Activated CD4-positive, alpha-beta T cell treated with anti-CD3 and anti-CD28 coated beads, Interleukin-2, amount 10 ng/mL, durations not matched to agents 24 days and 14 days (primary cell): ENCODE measurements at regions of chr1 and their contacts with region 1.

Region 1: GRCh38 chr1:193537266-193538002 is 351.0 kb upstream of the B3GALT2 start:
- DNase-seq: peak; percentile 91
- H3K4me3 Mint-ChIP-seq: peak overlapping the region; percentile 22
- H3K27ac Mint-ChIP-seq: peak overlapping the region; percentile 75
- H3K4me1 Mint-ChIP-seq: peaks cover 45% of the 10 kb centered on the region
- H3K27me3 Mint-ChIP-seq: no peaks in the 10 kb centered on the region

Region 2: GRCh38 chr1:193121616-193122593 is 415.5 kb before region 1 on chr1 and contains the start of gene CDC73:
- intact Hi-C with region 1: loop called (anchors 1 kb)
- DNase-seq: peak; percentile 99
- H3K4me3 Mint-ChIP-seq: peak within 1 kb of the TSS; percentile 100
- H3K27ac Mint-ChIP-seq: peak within 1 kb of the TSS; percentile 95
- H3K4me1 Mint-ChIP-seq: peaks cover 43% of the 10 kb centered on the region
- H3K27me3 Mint-ChIP-seq: peaks cover 10% of the 10 kb centered on the region
- total RNA-seq, gene CDC73: 55.2 and 56.0 TPM in 2 replicates

Region 3: GRCh38 chr1:193417945-193418744 is 119.3 kb before region 1 on chr1:
- intact Hi-C with region 1: loop called (anchors 1 kb)
- DNase-seq: peak; percentile 73
- H3K4me3 Mint-ChIP-seq: peak overlapping the region; percentile 76
- H3K27ac Mint-ChIP-seq: peak overlapping the region; percentile 67
- H3K4me1 Mint-ChIP-seq: peaks cover 38% of the 10 kb centered on the region
- H3K27me3 Mint-ChIP-seq: no peaks in the 10 kb centered on the region

Region 4: DNA sequence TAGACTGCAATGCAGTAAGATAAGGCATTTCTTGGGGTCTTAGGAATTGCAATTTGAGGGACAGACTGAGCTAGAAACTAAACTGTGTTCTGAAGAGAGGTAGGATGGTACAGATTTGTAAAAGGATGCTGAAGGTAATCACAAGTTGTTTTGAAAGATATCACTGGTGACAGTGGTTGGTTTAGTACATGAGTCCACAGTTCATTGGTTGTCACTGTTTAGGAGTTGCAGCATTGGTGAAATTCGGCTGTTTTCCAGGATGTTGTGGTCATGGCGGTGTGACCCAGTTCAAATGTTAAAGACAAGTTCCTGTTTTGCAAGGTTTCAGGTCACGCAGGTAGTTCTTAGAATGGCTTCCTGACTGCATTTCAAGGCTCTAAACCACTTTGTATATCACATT is 58.2 kb before region 1 on chr1:
- intact Hi-C with region 1: loop called (anchors 1 kb)
- DNase-seq: peak; percentile 95
- H3K4me3 Mint-ChIP-seq: peak overlapping the region; percentile 70
- H3K27ac Mint-ChIP-seq: peak overlapping the region; percentile 95
- H3K4me1 Mint-ChIP-seq: peaks cover 62% of the 10 kb centered on the region
- H3K27me3 Mint-ChIP-seq: no peaks in the 10 kb centered on the region

Region 5: GRCh38 chr1:193569096-193569982 is 31.9 kb after region 1 on chr1:
- intact Hi-C with region 1: loop called (anchors 1 kb)
- DNase-seq: peak; percentile 78
- H3K4me3 Mint-ChIP-seq: peak overlapping the region; percentile 4
- H3K27ac Mint-ChIP-seq: peak overlapping the region; percentile 84
- H3K4me1 Mint-ChIP-seq: peaks cover 20% of the 10 kb centered on the region
- H3K27me3 Mint-ChIP-seq: no peaks in the 10 kb centered on the region

Region 6: GRCh38 chr1:193799948-193800690 is 262.7 kb after region 1 on chr1:
- intact Hi-C with region 1: loop called (anchors 10 kb)
- DNase-seq: no peak
- H3K4me3 Mint-ChIP-seq: no peak overlapping the region
- H3K27ac Mint-ChIP-seq: peak overlapping the region; percentile 11
- H3K4me1 Mint-ChIP-seq: peaks cover 6% of the 10 kb centered on the region
- H3K27me3 Mint-ChIP-seq: no peaks in the 10 kb centered on the region

Region 7: DNA sequence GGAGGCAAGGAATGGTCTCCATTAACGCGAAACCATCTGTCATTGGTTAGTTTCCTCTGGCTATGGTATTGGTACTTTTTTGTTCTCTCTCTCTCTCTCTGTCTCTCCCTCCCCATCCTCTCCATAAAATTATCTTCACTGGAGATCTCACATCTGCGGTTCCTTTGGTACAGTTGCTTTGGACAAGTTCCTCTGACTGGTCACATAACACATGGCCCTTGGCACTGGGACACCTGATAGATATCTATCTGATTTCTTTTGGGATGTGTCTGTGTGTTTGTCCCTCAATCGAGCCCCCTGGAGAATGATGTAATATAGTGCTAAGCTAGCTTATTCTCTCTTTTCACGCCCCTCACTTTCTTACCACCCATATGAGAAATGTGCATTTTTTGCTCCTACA is 331.0 kb after region 1 on chr1:
- intact Hi-C with region 1: no loop called
- DNase-seq: no peak
- H3K4me3 Mint-ChIP-seq: no peak overlapping the region
- H3K27ac Mint-ChIP-seq: no peak overlapping the region
- H3K4me1 Mint-ChIP-seq: no peaks in the 10 kb centered on the region
- H3K27me3 Mint-ChIP-seq: no peaks in the 10 kb centered on the region